ENCODE measurements at regions of chr7 and their contacts with region 1.

Region 1: DNA sequence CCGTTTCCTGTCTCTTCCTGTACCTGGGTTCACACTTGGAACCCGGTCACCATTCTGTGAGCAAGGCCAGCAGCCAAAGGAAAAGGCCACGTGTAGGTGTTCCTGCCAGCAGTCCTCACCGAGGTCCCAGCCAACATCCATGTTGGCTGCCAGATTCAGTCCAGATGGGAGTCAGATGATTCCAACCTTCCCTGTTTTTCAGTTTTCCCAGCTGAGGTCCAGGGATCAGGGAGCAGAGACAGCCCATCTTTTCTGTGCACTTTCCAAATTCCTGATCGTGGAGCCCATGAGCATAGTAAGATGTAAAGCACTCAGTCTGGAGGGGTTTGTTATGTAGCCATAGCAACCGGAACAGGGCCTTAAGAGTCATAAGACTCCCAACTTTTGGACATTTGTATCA is 3.9 kb upstream of the PVRIG start:
- H3K4me3 ChIP-seq: no peak overlapping the region
- H3K27ac ChIP-seq: no peak overlapping the region
- H3K4me1 ChIP-seq: no peaks in the 10 kb centered on the region
- CTCF ChIP-seq: no peak

Region 2: DNA sequence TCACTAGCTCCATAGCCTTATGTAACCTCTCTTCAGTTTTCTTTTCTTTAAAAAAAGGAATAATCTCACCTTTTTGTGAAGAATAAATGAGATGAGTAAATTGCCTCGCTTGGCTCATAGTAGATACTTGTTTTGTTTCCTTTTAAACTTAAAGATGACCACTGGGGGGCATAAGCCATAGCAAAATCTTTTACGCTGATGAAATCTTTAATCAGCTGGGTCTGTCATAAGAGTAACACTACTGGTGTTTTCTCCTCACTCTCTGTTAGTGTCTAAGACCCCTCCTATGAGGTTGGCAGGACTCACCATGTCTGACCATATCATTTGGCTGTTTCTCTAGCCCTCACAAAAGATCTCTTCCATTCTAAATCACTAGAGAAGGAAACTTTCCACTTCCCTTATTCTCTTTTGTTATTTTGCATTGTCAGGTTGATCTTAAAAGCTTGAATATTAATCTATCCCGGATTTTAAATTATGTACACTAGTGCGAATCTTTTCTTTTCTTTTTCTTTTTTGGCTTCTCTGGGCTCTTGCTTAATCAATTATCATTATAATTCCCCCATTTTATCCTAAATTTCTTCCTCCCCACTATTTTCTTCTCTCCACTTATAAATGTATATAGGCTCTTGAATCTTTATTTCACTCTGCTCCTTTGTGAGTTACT is 25.7 kb before region 1 on chr7:
- CTCF ChIA-PET with region 1: interaction called, 22 read pairs
- POLR2A ChIA-PET with region 1: no interaction called
- H3K4me3 ChIP-seq: no peak overlapping the region
- H3K27ac ChIP-seq: no peak overlapping the region
- H3K4me1 ChIP-seq: no peaks in the 10 kb centered on the region
- CTCF ChIP-seq: no peak

Region 3: GRCh38 chr7:100342765-100343164 is 126.9 kb after region 1 on chr7:
- CTCF ChIA-PET with region 1: interaction called, 12 read pairs
- POLR2A ChIA-PET with region 1: interaction called, 3 read pairs
- H3K4me3 ChIP-seq: no peak overlapping the region
- H3K27ac ChIP-seq: no peak overlapping the region
- H3K4me1 ChIP-seq: 0 out of 2 replicates have a peak, but pooled peaks cover 3% of the 10 kb centered on the region
- CTCF ChIP-seq: no peak